K562 (cell line): ENCODE measurements at regions of chr1 and their contacts with region 1.

Region 1: DNA sequence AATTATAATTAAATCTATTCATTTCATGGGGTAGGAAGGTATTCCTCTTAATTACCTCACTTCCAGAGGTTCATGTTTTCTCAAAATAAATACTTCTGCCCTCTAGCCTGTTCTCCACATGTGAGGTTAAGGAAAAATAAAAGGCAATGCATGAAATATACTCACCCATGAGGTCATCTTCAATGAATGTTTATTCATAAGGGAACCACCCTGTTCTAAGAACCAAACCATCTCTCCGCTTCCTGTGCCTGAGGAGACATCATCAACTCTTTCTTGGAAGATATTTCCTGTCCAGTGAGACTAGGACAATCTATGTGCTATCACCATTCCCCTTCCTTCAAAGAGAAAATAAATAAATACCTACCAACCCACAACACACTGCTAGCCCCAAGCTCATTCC is 513.7 kb upstream of the PLXNA2 start:
- DNase-seq: no peak
- ATAC-seq: no peak
- H3K4me3 ChIP-seq: no peak overlapping the region
- H3K27ac ChIP-seq: no peak overlapping the region
- H3K4me1 ChIP-seq: no peaks in the 10 kb centered on the region
- H3K27me3 ChIP-seq: no peaks in the 10 kb centered on the region
- CTCF ChIP-seq: no peak
- EP300 ChIP-seq: no peak
- POLR2A ChIP-seq: no peak
- RAD21 ChIP-seq: no peak

Region 2: DNA sequence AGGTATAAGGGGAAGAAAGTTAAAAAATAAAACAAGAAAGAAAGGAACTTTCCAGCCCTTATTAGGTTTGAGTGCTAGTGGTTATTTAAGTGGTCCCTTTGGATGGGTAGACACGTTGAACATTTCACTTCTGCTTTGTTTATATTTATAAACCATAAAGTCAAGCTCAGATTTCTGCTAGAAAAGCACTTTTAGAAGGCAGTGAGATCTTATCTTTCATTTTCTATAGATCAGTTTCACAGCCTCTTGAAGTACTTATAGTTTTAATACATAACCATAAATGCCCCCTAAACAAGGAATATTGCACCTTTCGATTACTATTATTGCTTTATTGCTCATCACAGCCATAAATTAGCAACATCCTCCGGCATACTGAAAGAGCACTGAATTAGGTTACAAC is 66.8 kb before region 1 on chr1:
- CTCF ChIA-PET with region 1: no interaction called
- POLR2A ChIA-PET with region 1: no interaction called
- in situ Hi-C with region 1: no loop called
- intact Hi-C with region 1: loop called (anchors 2 kb)
- DNase-seq: no peak
- ATAC-seq: no peak
- H3K4me3 ChIP-seq: no peak overlapping the region
- H3K27ac ChIP-seq: no peak overlapping the region
- H3K4me1 ChIP-seq: no peaks in the 10 kb centered on the region
- H3K27me3 ChIP-seq: no peaks in the 10 kb centered on the region
- CTCF ChIP-seq: no peak
- EP300 ChIP-seq: no peak
- POLR2A ChIP-seq: no peak
- RAD21 ChIP-seq: no peak

Region 3: GRCh38 chr1:208965351-208965750 is 207.5 kb after region 1 on chr1:
- CTCF ChIA-PET with region 1: no interaction called
- POLR2A ChIA-PET with region 1: no interaction called
- in situ Hi-C with region 1: no loop called
- intact Hi-C with region 1: loop called (anchors 5 kb)
- DNase-seq: no peak
- ATAC-seq: no peak
- H3K4me3 ChIP-seq: no peak overlapping the region
- H3K27ac ChIP-seq: no peak overlapping the region
- H3K4me1 ChIP-seq: no peaks in the 10 kb centered on the region
- H3K27me3 ChIP-seq: no peaks in the 10 kb centered on the region
- CTCF ChIP-seq: no peak
- EP300 ChIP-seq: no peak
- POLR2A ChIP-seq: no peak
- RAD21 ChIP-seq: no peak